ENCODE measurements at regions of chr1 and their contacts with region 1.

Region 1: DNA sequence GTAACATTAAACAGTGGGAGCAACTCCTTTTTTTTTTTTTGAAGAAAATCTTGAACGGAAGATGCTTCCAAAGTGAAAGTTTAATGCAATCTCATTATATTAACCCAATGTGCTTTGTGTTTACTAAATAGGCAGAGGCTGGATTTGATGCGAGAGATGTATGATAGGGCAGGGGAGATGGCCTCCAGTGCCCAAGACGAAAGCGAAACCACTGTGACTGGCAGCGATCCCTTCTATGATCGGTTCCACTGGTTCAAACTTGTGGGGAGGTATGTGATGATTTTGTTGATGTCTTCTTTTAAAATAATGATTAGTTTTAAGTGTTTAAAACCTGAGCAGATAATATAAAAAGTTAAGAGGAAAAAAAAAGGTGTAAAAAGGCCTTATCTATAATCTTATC is 74.2 kb upstream of the PGD start:
- DNase-seq: no peak
- H3K4me3 ChIP-seq: no peak overlapping the region
- H3K27ac ChIP-seq: no peak overlapping the region
- H3K4me1 ChIP-seq: no peaks in the 10 kb centered on the region
- H3K27me3 ChIP-seq: no peaks in the 10 kb centered on the region
- CTCF ChIP-seq: no peak
- EP300 ChIP-seq: no peak
- RAD21 ChIP-seq: no peak

Region 2: GRCh38 chr1:10338047-10338446 is 13.4 kb after region 1 on chr1:
- CTCF ChIA-PET with region 1: interaction called, 10 read pairs
- POLR2A ChIA-PET with region 1: no interaction called
- DNase-seq: peak; percentile 71
- H3K4me3 ChIP-seq: no peak overlapping the region
- H3K27ac ChIP-seq: no peak overlapping the region
- H3K4me1 ChIP-seq: peaks cover 0 to 8% of the 10 kb centered on the region in 2 experiments; a peak in 2 of 4 replicates
- H3K27me3 ChIP-seq: no peaks in the 10 kb centered on the region
- CTCF ChIP-seq: peak; percentile 84
- EP300 ChIP-seq: no peak
- RAD21 ChIP-seq: peak; percentile 85

Measured in SK-N-SH (cell line).